ENCODE measurements at regions of chr12 and their contacts with region 1.

Region 1: DNA sequence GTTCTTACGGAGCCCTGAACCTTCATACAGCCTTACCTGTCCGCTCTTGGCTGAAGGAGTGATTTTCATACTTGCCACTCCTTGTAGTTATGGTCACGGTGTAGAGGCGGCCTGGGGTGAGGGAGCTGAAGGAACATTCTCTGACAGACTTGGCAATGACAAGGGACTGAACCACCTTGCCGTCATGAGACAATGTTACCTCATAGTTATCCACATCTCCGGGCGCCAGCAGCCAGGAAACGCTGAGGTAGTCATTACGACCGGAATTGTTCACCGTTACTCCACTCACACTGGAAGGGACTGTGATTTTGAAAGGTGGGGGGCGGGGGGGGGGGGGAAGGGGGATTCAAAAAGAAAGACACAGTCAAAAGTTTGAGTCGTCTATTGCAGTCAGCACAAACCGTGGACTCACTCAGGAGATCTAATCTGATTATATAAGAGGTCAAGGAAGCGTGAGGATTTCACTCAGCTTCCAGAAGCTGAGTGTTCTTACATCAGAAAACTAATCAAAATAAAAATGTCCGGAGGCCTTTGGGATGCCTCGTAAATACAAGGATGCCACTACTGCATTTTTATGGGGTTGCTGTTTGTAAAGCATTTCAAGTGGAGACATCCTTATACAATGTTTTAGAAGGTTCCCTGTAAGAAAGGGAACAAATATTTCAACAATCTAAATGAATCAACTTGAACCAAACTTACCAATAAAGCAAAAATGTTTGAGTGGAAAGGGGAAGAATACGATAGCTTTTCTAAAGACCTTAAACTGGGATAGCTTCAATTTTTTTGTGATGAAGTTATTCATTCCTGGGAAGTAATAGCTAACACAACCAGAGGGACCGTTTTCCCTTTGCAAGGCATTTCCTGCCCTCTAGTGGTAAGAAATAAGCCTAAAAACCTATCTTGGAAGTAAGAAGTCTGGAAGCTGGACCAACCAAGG is 60.6 kb downstream of the PTPRB start:
- DNase-seq: peak; percentile 68
- H3K4me3 ChIP-seq: no peak overlapping the region
- H3K27ac ChIP-seq: peak overlapping the region; percentile 35
- H3K4me1 ChIP-seq: peaks cover 13% of the 10 kb centered on the region
- H3K27me3 ChIP-seq: no peaks in the 10 kb centered on the region
- CTCF ChIP-seq: peak; percentile 59 to 62
- POLR2A ChIP-seq: no peak

Region 2: GRCh38 chr12:69779928-69780327 is 796.7 kb before region 1 on chr12:
- CTCF ChIA-PET with region 1: interaction called, 21 read pairs
- POLR2A ChIA-PET with region 1: no interaction called
- dilution Hi-C with region 1: no loop called
- intact Hi-C with region 1: loop called (anchors 10 kb)
- DNase-seq: peak; percentile 67
- H3K4me3 ChIP-seq: no peak overlapping the region
- H3K27ac ChIP-seq: no peak overlapping the region
- H3K4me1 ChIP-seq: no peaks in the 10 kb centered on the region
- H3K27me3 ChIP-seq: no peaks in the 10 kb centered on the region
- CTCF ChIP-seq: peak; percentile 58 to 73
- POLR2A ChIP-seq: no peak

Region 3: GRCh38 chr12:70549340-70550179 is 27.1 kb before region 1 on chr12:
- CTCF ChIA-PET with region 1: interaction called, 13 read pairs
- POLR2A ChIA-PET with region 1: no interaction called
- dilution Hi-C with region 1: no loop called
- intact Hi-C with region 1: no loop called
- DNase-seq: peak; percentile 93
- H3K4me3 ChIP-seq: no peak overlapping the region
- H3K27ac ChIP-seq: peak overlapping the region; percentile 76
- H3K4me1 ChIP-seq: peaks cover 38% of the 10 kb centered on the region
- H3K27me3 ChIP-seq: no peaks in the 10 kb centered on the region
- CTCF ChIP-seq: no peak
- POLR2A ChIP-seq: no peak

Region 4: GRCh38 chr12:70557583-70558191 is 18.9 kb before region 1 on chr12:
- CTCF ChIA-PET with region 1: interaction called, 13 read pairs
- POLR2A ChIA-PET with region 1: no interaction called
- dilution Hi-C with region 1: no loop called
- intact Hi-C with region 1: no loop called
- DNase-seq: no peak
- H3K4me3 ChIP-seq: no peak overlapping the region
- H3K27ac ChIP-seq: no peak overlapping the region
- H3K4me1 ChIP-seq: no peaks in the 10 kb centered on the region
- H3K27me3 ChIP-seq: no peaks in the 10 kb centered on the region
- CTCF ChIP-seq: no peak
- POLR2A ChIP-seq: no peak

Region 5: GRCh38 chr12:70619471-70620152 is 43.0 kb after region 1 on chr12:
- CTCF ChIA-PET with region 1: interaction called, 11 read pairs
- POLR2A ChIA-PET with region 1: no interaction called
- dilution Hi-C with region 1: no loop called
- intact Hi-C with region 1: no loop called
- DNase-seq: no peak
- H3K4me3 ChIP-seq: no peak overlapping the region
- H3K27ac ChIP-seq: no peak overlapping the region
- H3K4me1 ChIP-seq: peaks cover 21% of the 10 kb centered on the region
- H3K27me3 ChIP-seq: no peaks in the 10 kb centered on the region
- CTCF ChIP-seq: no peak
- POLR2A ChIP-seq: no peak